Left ventricle myocardium superior (tissue), 1 donor: ENCODE measurements at regions of chr20 and their contacts with region 1.

Region 1: DNA sequence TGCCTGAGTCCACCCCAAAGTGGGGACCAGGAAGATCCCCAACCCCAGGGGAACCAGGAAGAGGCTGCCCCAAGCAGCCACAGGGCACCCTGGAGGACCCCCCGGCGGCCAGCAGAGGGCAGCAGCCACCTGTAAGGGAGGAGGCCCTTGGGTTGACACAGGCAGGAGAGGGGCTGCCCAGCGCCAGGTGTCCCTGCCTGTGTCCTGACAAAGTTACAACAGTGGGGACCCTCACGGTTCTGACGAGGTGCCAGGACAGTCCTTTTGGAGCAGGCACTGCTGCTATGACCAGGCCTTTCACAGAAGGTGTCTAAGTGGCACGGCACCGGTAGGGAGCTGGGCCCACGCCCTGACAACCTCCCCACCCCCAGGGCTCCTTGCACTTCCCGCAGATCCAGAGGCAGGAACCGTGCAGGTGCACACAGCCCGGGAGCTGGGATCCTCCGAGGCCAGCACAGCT is 176.7 kb downstream of the BMP7 start:
- DNase-seq: peak; percentile 81
- ATAC-seq: peak; percentile 87

Region 2: DNA sequence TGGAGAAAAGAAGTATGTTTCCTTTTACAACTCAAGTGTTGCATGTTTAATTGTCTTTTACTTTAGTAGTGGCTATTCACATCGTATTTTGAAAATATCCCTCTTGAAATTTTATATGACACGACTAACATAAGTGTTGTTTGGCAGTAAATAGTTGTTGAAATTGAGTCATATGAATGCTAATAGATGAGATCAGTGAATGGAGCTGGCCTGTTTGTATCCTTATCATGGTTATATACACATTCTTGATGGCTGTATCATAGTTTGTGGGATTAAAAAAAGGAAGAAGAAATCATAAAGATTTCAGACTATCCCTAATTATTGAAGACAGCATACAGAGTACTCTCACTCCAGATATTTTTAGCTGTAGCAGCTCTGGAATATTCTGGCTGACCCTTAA is 253.1 kb after region 1 on chr20:
- intact Hi-C with region 1: loop called (anchors 5 kb)
- DNase-seq: no peak
- ATAC-seq: no peak